SK-N-SH (cell line): ENCODE measurements at regions of chr16 and their contacts with region 1.

Region 1: GRCh38 chr16:87806603-87807546 is 41.1 kb upstream of the KLHDC4 start:
- DNase-seq: peak; percentile 86
- H3K4me3 ChIP-seq: peak overlapping the region; percentile 10 to 21; a peak in 2 of 4 replicates
- H3K27ac ChIP-seq: peak overlapping the region; percentile 49 to 94
- H3K4me1 ChIP-seq: peaks cover 12 to 18% of the 10 kb centered on the region in 2 experiments; a peak in 2 of 4 replicates
- H3K27me3 ChIP-seq: no peaks in the 10 kb centered on the region
- CTCF ChIP-seq: no peak
- EP300 ChIP-seq: peak in 1 of 2 experiments; percentile 60; a peak in 1 of 4 replicates
- RAD21 ChIP-seq: peak; percentile 8; the same call in 1 of the 2 replicates

Region 2: GRCh38 chr16:87790278-87791032 is 16.4 kb before region 1 on chr16:
- CTCF ChIA-PET with region 1: interaction called, 17 read pairs
- POLR2A ChIA-PET with region 1: interaction called, 11 read pairs
- DNase-seq: peak; percentile 70
- H3K4me3 ChIP-seq: no peak overlapping the region
- H3K27ac ChIP-seq: no peak overlapping the region
- H3K4me1 ChIP-seq: peaks cover 0 to 2% of the 10 kb centered on the region in 2 experiments; a peak in 1 of 4 replicates
- H3K27me3 ChIP-seq: no peaks in the 10 kb centered on the region
- CTCF ChIP-seq: no peak
- EP300 ChIP-seq: no peak
- RAD21 ChIP-seq: no peak

Region 3: GRCh38 chr16:87834623-87835407 is 27.9 kb after region 1 on chr16:
- CTCF ChIA-PET with region 1: interaction called, 3 read pairs
- POLR2A ChIA-PET with region 1: interaction called, 15 read pairs
- DNase-seq: peak; percentile 87
- H3K4me3 ChIP-seq: no peak overlapping the region
- H3K27ac ChIP-seq: peak overlapping the region in 1 of 2 experiments; percentile 71; a peak in 2 of 4 replicates
- H3K4me1 ChIP-seq: peaks cover 7 to 21% of the 10 kb centered on the region in 2 experiments; a peak in 2 of 4 replicates
- H3K27me3 ChIP-seq: no peaks in the 10 kb centered on the region
- CTCF ChIP-seq: no peak
- EP300 ChIP-seq: no peak; a peak in 1 of 4 replicates
- RAD21 ChIP-seq: no peak